Activated naive CD4-positive, alpha-beta T cell treated with anti-CD3 and anti-CD28 coated beads for 36 hours (primary cell): ENCODE measurements at regions of chr12 and their contacts with region 1.

Region 1: GRCh38 chr12:28065889-28066630 is 93.5 kb upstream of the PTHLH start:
- DNase-seq: peak; percentile 17
- H3K4me3 Mint-ChIP-seq: no peak overlapping the region
- H3K27ac Mint-ChIP-seq: no peak overlapping the region
- H3K4me1 Mint-ChIP-seq: peaks cover 18% of the 10 kb centered on the region
- H3K27me3 Mint-ChIP-seq: peaks cover 6% of the 10 kb centered on the region

Region 2: GRCh38 chr12:27975244-27976136 is 90.6 kb before region 1 on chr12:
- CTCF ChIA-PET with region 1: no interaction called
- intact Hi-C with region 1: loop called (anchors 5 kb)
- DNase-seq: peak; percentile 29
- H3K4me3 Mint-ChIP-seq: peak overlapping the region; percentile 53
- H3K27ac Mint-ChIP-seq: no peak overlapping the region
- H3K4me1 Mint-ChIP-seq: peaks cover 20% of the 10 kb centered on the region
- H3K27me3 Mint-ChIP-seq: peaks cover 82% of the 10 kb centered on the region

Region 3: GRCh38 chr12:28079539-28079938 is 13.5 kb after region 1 on chr12:
- CTCF ChIA-PET with region 1: no interaction called
- intact Hi-C with region 1: loop called (anchors 1 kb)
- DNase-seq: no peak
- H3K4me3 Mint-ChIP-seq: no peak overlapping the region
- H3K27ac Mint-ChIP-seq: no peak overlapping the region
- H3K4me1 Mint-ChIP-seq: peaks cover 8% of the 10 kb centered on the region
- H3K27me3 Mint-ChIP-seq: peaks cover 8% of the 10 kb centered on the region

Region 4: GRCh38 chr12:28258998-28259397 is 192.9 kb after region 1 on chr12:
- CTCF ChIA-PET with region 1: no interaction called
- intact Hi-C with region 1: no loop called
- DNase-seq: no peak
- H3K4me3 Mint-ChIP-seq: no peak overlapping the region
- H3K27ac Mint-ChIP-seq: no peak overlapping the region
- H3K4me1 Mint-ChIP-seq: peaks cover 11% of the 10 kb centered on the region
- H3K27me3 Mint-ChIP-seq: no peaks in the 10 kb centered on the region